CD4-positive, alpha-beta T cell (primary cell): ENCODE measurements at regions of chr3 and their contacts with region 1.

Region 1: GRCh38 chr3:46078712-46079400 is 51.6 kb upstream of the XCR1 start:
- DNase-seq: peak; percentile 73 to 96 (median 88)
- ATAC-seq: peak; percentile 100
- H3K4me3 ChIP-seq: no peak overlapping the region
- H3K4me3 Mint-ChIP-seq: no peak overlapping the region
- H3K27ac ChIP-seq: no peak overlapping the region
- H3K27ac Mint-ChIP-seq: no peak overlapping the region
- H3K4me1 ChIP-seq: peaks cover 5% of the 10 kb centered on the region
- H3K4me1 Mint-ChIP-seq: peaks cover 5% of the 10 kb centered on the region
- H3K27me3 ChIP-seq: no peaks in the 10 kb centered on the region
- H3K27me3 Mint-ChIP-seq: no peaks in the 10 kb centered on the region
- CTCF ChIP-seq: peak; percentile 100

Region 2: GRCh38 chr3:44099566-44100297 is 1979.1 kb before region 1 on chr3:
- CTCF ChIA-PET with region 1: no interaction called
- POLR2A ChIA-PET with region 1: no interaction called
- intact Hi-C with region 1: no loop called
- DNase-seq: no peak
- ATAC-seq: no peak
- H3K4me3 ChIP-seq: no peak overlapping the region
- H3K4me3 Mint-ChIP-seq: no peak overlapping the region
- H3K27ac ChIP-seq: no peak overlapping the region
- H3K27ac Mint-ChIP-seq: no peak overlapping the region
- H3K4me1 ChIP-seq: no peaks in the 10 kb centered on the region
- H3K4me1 Mint-ChIP-seq: no peaks in the 10 kb centered on the region
- H3K27me3 ChIP-seq: peaks cover 6 to 7% of the 10 kb centered on the region in 2 experiments
- H3K27me3 Mint-ChIP-seq: peaks cover 76% of the 10 kb centered on the region
- CTCF ChIP-seq: no peak

Region 3: DNA sequence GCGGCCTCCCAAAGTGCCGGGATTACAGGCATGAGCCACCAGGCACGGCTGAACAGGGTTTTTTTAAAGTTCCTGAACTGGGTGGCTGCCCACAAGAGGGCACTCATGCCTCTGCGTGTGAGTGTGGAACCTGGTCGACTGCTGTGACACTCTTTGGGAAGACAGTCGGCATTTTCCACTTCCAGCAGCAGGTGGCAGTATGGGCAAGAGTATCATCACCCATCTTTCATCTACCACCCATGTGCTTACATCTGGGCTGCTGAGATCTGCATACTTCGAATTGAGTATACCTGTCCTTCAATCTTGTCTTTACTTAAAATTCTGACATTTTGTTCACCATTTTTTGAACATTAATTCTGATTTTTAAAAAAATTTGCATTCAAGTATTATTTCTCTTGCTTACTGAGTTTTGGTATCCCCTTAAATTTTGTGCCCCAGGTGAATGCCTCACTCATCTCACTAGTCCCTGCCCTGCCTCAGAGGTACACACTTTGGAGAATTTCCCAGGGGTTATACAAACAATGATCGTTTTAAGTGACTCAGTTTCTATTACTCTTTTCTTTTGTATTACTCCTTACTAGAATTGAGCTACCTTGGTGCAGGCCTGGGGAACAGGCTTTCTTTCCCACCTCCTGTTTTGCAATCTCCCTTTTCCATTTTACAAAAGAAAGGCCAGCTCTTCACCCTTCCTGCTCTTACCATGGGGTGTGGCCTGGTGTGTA is 1041.0 kb before region 1 on chr3:
- CTCF ChIA-PET with region 1: no interaction called
- POLR2A ChIA-PET with region 1: no interaction called
- intact Hi-C with region 1: loop called in 1 of 2 experiments (anchors 10 kb)
- DNase-seq: peak; percentile 86 to 96 (median 90)
- ATAC-seq: peak; percentile 94
- H3K4me3 ChIP-seq: no peak overlapping the region
- H3K4me3 Mint-ChIP-seq: peak overlapping the region; percentile 62
- H3K27ac ChIP-seq: no peak overlapping the region
- H3K27ac Mint-ChIP-seq: no peak overlapping the region
- H3K4me1 ChIP-seq: peaks cover 51% of the 10 kb centered on the region
- H3K4me1 Mint-ChIP-seq: peaks cover 56% of the 10 kb centered on the region
- H3K27me3 ChIP-seq: peaks cover 3 to 8% of the 10 kb centered on the region in 2 experiments
- H3K27me3 Mint-ChIP-seq: peaks cover 49% of the 10 kb centered on the region
- CTCF ChIP-seq: peak; percentile 91

Region 4: GRCh38 chr3:45760878-45761711 is 317.8 kb before region 1 on chr3:
- CTCF ChIA-PET with region 1: interaction called, 9 read pairs
- POLR2A ChIA-PET with region 1: no interaction called
- intact Hi-C with region 1: loop called (anchors 1 to 2 kb)
- DNase-seq: peak in 12 of 14 experiments; percentile 14 to 74 (median 26)
- ATAC-seq: peak; percentile 54
- H3K4me3 ChIP-seq: no peak overlapping the region
- H3K4me3 Mint-ChIP-seq: no peak overlapping the region
- H3K27ac ChIP-seq: no peak overlapping the region
- H3K27ac Mint-ChIP-seq: no peak overlapping the region
- H3K4me1 ChIP-seq: peaks cover 6% of the 10 kb centered on the region
- H3K4me1 Mint-ChIP-seq: no peaks in the 10 kb centered on the region
- H3K27me3 ChIP-seq: peaks cover 0 to 3% of the 10 kb centered on the region in 2 experiments
- H3K27me3 Mint-ChIP-seq: no peaks in the 10 kb centered on the region
- CTCF ChIP-seq: peak; percentile 72

Region 5: GRCh38 chr3:45958321-45958791 is 120.5 kb before region 1 on chr3:
- CTCF ChIA-PET with region 1: interaction called, 10 read pairs
- POLR2A ChIA-PET with region 1: no interaction called
- intact Hi-C with region 1: no loop called
- DNase-seq: peak in 1 of 14 experiments; percentile 65
- ATAC-seq: no peak
- H3K4me3 ChIP-seq: no peak overlapping the region
- H3K4me3 Mint-ChIP-seq: no peak overlapping the region
- H3K27ac ChIP-seq: no peak overlapping the region
- H3K27ac Mint-ChIP-seq: no peak overlapping the region
- H3K4me1 ChIP-seq: peaks cover 41% of the 10 kb centered on the region
- H3K4me1 Mint-ChIP-seq: peaks cover 5% of the 10 kb centered on the region
- H3K27me3 ChIP-seq: no peaks in the 10 kb centered on the region
- H3K27me3 Mint-ChIP-seq: no peaks in the 10 kb centered on the region
- CTCF ChIP-seq: no peak

Region 6: GRCh38 chr3:45995236-45996192 is 83.3 kb before region 1 on chr3 and contains the start of gene FYCO1:
- CTCF ChIA-PET with region 1: interaction called, 4 read pairs
- POLR2A ChIA-PET with region 1: no interaction called
- intact Hi-C with region 1: loop called in 1 of 2 experiments (anchors 5 kb)
- DNase-seq: peak; percentile 78 to 94 (median 84)
- ATAC-seq: peak; percentile 84
- H3K4me3 ChIP-seq: peak within 1 kb of the TSS; percentile 87
- H3K4me3 Mint-ChIP-seq: peak within 1 kb of the TSS; percentile 94
- H3K27ac ChIP-seq: peak within 1 kb of the TSS; percentile 75 to 90
- H3K27ac Mint-ChIP-seq: peak within 1 kb of the TSS; percentile 92
- H3K4me1 ChIP-seq: peaks cover 50% of the 10 kb centered on the region
- H3K4me1 Mint-ChIP-seq: peaks cover 51% of the 10 kb centered on the region
- H3K27me3 ChIP-seq: no peaks in the 10 kb centered on the region
- H3K27me3 Mint-ChIP-seq: no peaks in the 10 kb centered on the region
- CTCF ChIP-seq: no peak
- total RNA-seq, gene FYCO1: 17.4 to 20.1 TPM

Region 7: GRCh38 chr3:46065294-46065721 is 13.5 kb before region 1 on chr3:
- CTCF ChIA-PET with region 1: interaction called, 22 read pairs
- POLR2A ChIA-PET with region 1: interaction called, 24 read pairs
- intact Hi-C with region 1: no loop called
- DNase-seq: peak; percentile 62 to 97 (median 75)
- ATAC-seq: peak; percentile 84
- H3K4me3 ChIP-seq: no peak overlapping the region
- H3K4me3 Mint-ChIP-seq: peak overlapping the region; percentile 70
- H3K27ac ChIP-seq: peak overlapping the region; percentile 17 to 37
- H3K27ac Mint-ChIP-seq: peak overlapping the region; percentile 87
- H3K4me1 ChIP-seq: peaks cover 69% of the 10 kb centered on the region
- H3K4me1 Mint-ChIP-seq: peaks cover 69% of the 10 kb centered on the region
- H3K27me3 ChIP-seq: no peaks in the 10 kb centered on the region
- H3K27me3 Mint-ChIP-seq: peaks cover under 1% of the 10 kb centered on the region
- CTCF ChIP-seq: no peak

Region 8: GRCh38 chr3:46127501-46127900 is 48.6 kb after region 1 on chr3:
- CTCF ChIA-PET with region 1: no interaction called
- POLR2A ChIA-PET with region 1: no interaction called
- intact Hi-C with region 1: no loop called
- DNase-seq: no peak
- ATAC-seq: no peak
- H3K4me3 ChIP-seq: no peak overlapping the region
- H3K4me3 Mint-ChIP-seq: no peak overlapping the region
- H3K27ac ChIP-seq: no peak overlapping the region
- H3K27ac Mint-ChIP-seq: no peak overlapping the region
- H3K4me1 ChIP-seq: peaks cover 16% of the 10 kb centered on the region
- H3K4me1 Mint-ChIP-seq: peaks cover 12% of the 10 kb centered on the region
- H3K27me3 ChIP-seq: no peaks in the 10 kb centered on the region
- H3K27me3 Mint-ChIP-seq: no peaks in the 10 kb centered on the region
- CTCF ChIP-seq: no peak

Region 9: DNA sequence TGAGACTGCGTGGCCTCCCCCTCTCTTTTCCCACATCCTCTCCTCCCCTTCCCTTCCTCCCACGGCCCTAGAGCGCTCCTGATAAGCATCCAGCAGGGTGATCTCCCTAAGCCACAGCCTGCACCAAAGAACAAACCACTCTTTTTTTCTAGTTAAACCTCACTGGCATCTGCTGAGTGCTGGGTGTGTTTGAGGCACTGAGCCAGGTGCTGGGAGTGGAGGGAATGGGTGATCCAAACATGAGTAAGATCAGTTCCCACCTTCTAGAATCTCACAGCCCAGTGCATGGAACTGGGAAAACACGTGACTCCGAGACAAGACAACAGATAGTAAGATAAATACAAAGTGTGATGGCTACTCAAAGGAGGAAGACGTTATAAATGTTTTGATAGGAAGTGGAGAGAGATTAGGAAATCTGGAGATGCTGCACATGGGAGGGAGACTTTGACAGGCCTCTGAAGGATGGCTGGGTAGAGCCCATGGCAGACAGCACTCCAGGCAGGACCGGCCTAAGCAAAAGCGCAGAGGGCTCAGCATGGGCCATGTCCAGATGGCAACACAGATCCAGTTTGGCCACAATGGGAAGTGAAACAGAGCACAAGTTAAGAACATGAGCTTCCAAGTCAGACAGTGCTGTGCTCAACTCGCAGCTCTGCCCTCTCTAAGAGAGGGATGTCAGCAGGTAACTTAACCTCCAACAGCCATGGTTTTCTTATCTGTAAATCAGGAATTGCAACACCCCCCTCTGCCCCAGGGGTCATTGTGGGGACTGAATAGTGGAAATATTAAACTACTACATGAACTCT is 219.0 kb after region 1 on chr3:
- CTCF ChIA-PET with region 1: no interaction called
- POLR2A ChIA-PET with region 1: no interaction called
- intact Hi-C with region 1: no loop called
- DNase-seq: no peak
- ATAC-seq: no peak
- H3K4me3 ChIP-seq: no peak overlapping the region
- H3K4me3 Mint-ChIP-seq: no peak overlapping the region
- H3K27ac ChIP-seq: peak overlapping the region in 1 of 2 donors; percentile 33
- H3K27ac Mint-ChIP-seq: peak overlapping the region; percentile 43
- H3K4me1 ChIP-seq: peaks cover 81% of the 10 kb centered on the region
- H3K4me1 Mint-ChIP-seq: peaks cover 80% of the 10 kb centered on the region
- H3K27me3 ChIP-seq: no peaks in the 10 kb centered on the region
- H3K27me3 Mint-ChIP-seq: no peaks in the 10 kb centered on the region
- CTCF ChIP-seq: no peak